ENCODE measurements at regions of chr11 and their contacts with region 1.

Region 1: GRCh38 chr11:58654079-58654907 is 31.8 kb downstream of the CNTF start:
- DNase-seq: no peak
- H3K4me3 ChIP-seq: no peak overlapping the region
- CTCF ChIP-seq: peak; percentile 92

Region 2: DNA sequence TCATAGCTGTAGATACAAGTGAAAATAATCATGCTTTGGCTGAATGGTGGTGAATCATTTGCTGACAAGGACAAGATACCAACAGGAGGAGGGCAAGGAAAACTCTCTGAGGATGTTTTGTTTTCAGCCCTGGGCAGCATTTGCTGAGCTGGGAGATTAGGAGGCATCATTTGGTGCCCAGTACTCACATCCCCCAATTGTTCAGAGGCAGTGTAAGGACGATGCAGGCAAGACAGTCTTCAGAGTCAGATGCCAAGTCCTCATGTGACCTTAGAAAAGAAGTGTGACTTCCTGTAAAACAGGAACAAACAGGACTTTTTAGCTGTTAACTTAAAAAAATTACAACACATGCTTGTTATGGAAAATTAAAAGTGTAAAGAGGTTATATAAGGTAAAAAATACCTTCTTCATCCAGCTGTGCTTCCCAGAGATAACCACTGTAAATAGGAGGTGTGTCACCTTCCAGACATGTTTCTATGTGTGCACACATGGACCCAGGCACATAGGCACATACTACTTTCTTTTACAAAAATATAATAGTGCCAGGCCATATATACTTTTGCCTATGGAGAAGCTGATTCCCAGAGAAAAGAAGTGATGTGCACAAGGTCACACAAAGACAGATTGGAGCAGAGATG is 13.8 kb before region 1 on chr11:
- CTCF ChIA-PET with region 1: interaction called, 38 read pairs
- POLR2A ChIA-PET with region 1: no interaction called
- DNase-seq: no peak
- H3K4me3 ChIP-seq: no peak overlapping the region
- CTCF ChIP-seq: no peak

Region 3: GRCh38 chr11:58675334-58676155 is 21.3 kb after region 1 on chr11:
- CTCF ChIA-PET with region 1: interaction called, 14 read pairs
- POLR2A ChIA-PET with region 1: no interaction called
- DNase-seq: no peak
- H3K4me3 ChIP-seq: no peak overlapping the region
- CTCF ChIP-seq: peak; percentile 96

Region 4: DNA sequence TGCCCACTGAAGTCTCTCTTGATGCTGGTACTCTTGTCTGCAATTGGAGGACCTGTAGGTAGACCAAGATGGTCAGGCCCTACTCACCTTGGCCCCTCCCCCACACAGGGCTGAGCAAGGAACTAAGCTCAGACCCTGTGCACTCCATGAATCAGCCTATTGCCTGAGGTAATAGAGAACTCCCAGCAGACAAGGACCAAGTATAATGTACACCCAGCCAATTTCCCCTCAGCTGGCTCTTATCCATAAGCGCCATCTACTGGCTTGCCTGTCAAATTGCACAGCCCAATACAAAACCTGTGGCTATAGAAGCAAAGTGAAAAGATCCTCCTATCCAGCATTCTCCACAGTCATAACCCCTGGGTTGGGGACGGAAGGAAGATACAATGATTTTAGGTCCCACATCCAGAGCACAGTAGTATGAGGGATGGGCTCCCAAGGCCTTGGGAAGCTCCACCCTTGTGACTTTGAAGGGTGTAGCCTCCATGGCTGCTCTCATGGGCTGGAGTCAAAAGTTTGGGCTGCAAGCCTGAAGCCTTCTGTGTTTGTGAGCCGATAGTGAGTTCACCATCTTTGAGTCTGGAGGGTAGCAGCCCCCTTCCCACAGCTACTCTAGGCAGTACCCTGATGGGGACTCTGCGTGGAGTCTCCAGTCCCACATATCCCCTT is 134.2 kb after region 1 on chr11:
- CTCF ChIA-PET with region 1: interaction called, 74 read pairs
- POLR2A ChIA-PET with region 1: no interaction called
- DNase-seq: no peak
- H3K4me3 ChIP-seq: no peak overlapping the region
- CTCF ChIP-seq: peak; percentile 71

Region 5: GRCh38 chr11:58832056-58832645 is 177.9 kb after region 1 on chr11:
- CTCF ChIA-PET with region 1: no interaction called
- POLR2A ChIA-PET with region 1: no interaction called
- DNase-seq: no peak
- H3K4me3 ChIP-seq: no peak overlapping the region
- CTCF ChIP-seq: no peak

Region 6: GRCh38 chr11:58900479-58901420 is 246.5 kb after region 1 on chr11:
- CTCF ChIA-PET with region 1: interaction called, 20 read pairs
- POLR2A ChIA-PET with region 1: no interaction called
- DNase-seq: no peak
- H3K4me3 ChIP-seq: no peak overlapping the region
- CTCF ChIP-seq: peak; percentile 66

Region 7: DNA sequence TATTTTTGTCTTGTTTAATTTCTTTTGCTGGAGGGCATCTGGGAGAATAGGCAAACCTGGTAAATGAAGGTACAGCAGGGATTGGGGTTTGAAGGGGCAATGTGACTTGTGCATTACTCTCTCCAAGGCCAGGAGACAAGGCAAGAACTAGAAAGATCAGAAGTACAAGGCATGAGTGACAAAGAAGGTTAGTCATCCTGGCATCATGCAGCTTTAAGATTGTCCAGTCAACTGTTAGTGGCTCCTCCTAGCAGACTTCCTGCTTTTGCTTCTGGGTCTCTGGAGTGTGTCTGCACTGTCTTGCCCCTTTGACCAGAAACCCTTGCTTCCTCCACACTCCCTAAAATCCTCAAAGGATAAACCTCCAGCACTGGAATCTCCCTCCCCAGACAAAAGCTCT is 257.8 kb after region 1 on chr11:
- CTCF ChIA-PET with region 1: no interaction called
- POLR2A ChIA-PET with region 1: no interaction called
- DNase-seq: no peak
- H3K4me3 ChIP-seq: no peak overlapping the region
- CTCF ChIP-seq: no peak

Measured in AG04449 (cell line).